Endothelial cell of umbilical vein (primary cell): ENCODE measurements at regions of chr5 and their contacts with region 1.

Region 1: GRCh38 chr5:147509710-147510651 is at the start of gene DPYSL3:
- DNase-seq: peak; percentile 90
- H3K4me3 ChIP-seq: peak within 1 kb of the TSS; percentile 46 to 85 (median 79)
- H3K27ac ChIP-seq: peak within 1 kb of the TSS; percentile 67
- H3K4me1 ChIP-seq: peaks cover 26% of the 10 kb centered on the region
- H3K27me3 ChIP-seq: no peaks in the 10 kb centered on the region
- CTCF ChIP-seq: peak; percentile 25 to 55
- POLR2A ChIP-seq: peak; percentile 60
- total RNA-seq, gene DPYSL3: 142 and 146 TPM in 2 replicates

Region 2: DNA sequence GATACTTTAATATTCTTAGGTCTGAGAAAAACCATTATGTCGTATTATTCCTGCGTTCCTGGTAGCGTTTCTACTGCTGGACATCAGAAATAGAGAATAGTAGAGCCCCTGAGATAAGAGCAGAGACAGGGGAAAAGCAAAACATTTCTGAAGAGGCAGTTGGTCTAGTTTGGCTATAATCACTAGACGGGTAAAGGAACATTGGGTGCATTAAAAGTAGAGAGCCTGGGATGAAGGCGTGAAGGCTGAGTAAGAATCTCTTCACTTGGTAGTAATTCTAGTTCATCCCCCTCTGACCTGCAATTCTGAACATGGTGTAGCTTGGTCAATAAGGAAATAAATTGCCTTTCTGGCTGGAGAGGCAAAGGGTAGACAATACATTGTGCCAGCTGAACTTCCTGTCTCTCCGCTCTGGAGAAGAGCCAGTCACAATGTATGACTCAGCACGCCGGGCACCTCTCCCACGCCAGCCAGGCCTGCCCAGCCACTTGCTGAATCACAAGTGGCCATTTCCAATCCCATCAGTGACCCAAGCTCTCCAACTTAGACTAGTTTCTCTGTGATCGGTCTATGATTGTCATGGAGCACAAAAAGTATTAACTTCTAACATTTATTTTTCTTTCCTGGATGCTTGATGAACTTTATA is 199.8 kb before region 1 on chr5:
- CTCF ChIA-PET with region 1: no interaction called
- POLR2A ChIA-PET with region 1: no interaction called
- dilution Hi-C with region 1: no loop called
- intact Hi-C with region 1: no loop called
- DNase-seq: peak; percentile 96
- H3K4me3 ChIP-seq: no peak overlapping the region
- H3K27ac ChIP-seq: peak overlapping the region; percentile 83
- H3K4me1 ChIP-seq: peaks cover 15% of the 10 kb centered on the region
- H3K27me3 ChIP-seq: no peaks in the 10 kb centered on the region
- CTCF ChIP-seq: no peak
- POLR2A ChIP-seq: no peak

Region 3: DNA sequence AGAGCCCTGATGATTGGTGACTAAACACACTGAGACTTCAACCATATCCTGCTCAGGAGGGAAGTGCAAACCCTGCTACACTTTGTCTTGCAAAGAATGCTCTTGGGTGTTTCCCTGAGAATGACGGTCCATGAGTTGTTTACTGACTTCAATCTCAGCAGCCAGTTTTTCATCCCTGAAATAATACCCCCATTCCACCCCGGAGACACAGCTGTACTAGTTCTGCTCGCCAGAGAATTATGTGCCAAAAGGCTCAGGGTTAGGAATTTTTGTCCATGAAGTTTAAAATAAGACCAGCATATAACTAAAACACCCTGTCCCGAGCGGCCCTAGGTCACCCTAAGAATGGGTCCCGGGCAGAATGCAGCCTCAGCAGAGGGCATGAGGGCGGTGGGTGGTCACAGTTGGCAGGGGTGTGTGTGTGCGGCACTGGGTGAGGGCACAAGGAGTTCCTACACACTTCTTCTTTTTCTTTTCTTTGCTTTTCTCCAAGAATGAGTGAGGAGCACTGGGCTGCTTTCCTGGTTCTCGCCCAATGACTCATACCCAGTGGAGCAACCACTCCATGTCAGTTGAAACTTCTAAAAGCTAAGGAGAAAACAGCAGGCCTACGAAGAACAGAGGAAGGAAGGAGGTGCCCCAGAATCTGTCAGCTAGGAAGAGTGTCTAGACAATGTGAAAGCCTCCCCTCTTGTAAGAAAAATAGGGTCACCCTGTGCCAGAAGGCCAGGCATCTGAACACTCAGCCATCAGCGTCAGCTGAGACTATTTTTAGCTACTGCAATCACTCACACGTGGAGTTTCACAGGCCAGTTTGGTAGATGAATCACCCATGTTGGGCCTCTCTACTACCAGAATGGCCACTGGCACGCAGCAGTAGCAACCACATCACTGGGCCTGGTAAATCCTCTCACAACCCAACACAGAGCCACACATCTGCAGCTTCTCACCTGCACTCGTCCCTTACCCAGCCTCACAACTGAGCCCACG is 106.0 kb before region 1 on chr5:
- CTCF ChIA-PET with region 1: no interaction called
- POLR2A ChIA-PET with region 1: no interaction called
- dilution Hi-C with region 1: no loop called
- intact Hi-C with region 1: loop called (anchors 1 kb)
- DNase-seq: peak; percentile 96
- H3K4me3 ChIP-seq: no peak overlapping the region
- H3K27ac ChIP-seq: peak overlapping the region; percentile 95
- H3K4me1 ChIP-seq: peaks cover 25% of the 10 kb centered on the region
- H3K27me3 ChIP-seq: no peaks in the 10 kb centered on the region
- CTCF ChIP-seq: no peak
- POLR2A ChIP-seq: no peak

Region 4: GRCh38 chr5:147464211-147464610 is 45.8 kb before region 1 on chr5:
- CTCF ChIA-PET with region 1: interaction called, 25 read pairs
- POLR2A ChIA-PET with region 1: interaction called, 4 read pairs
- dilution Hi-C with region 1: no loop called
- intact Hi-C with region 1: loop called (anchors 1 kb)
- DNase-seq: peak; percentile 81
- H3K4me3 ChIP-seq: no peak overlapping the region
- H3K27ac ChIP-seq: no peak overlapping the region
- H3K4me1 ChIP-seq: peaks cover 10% of the 10 kb centered on the region
- H3K27me3 ChIP-seq: no peaks in the 10 kb centered on the region
- CTCF ChIP-seq: peak; percentile 55 to 61
- POLR2A ChIP-seq: no peak

Region 5: DNA sequence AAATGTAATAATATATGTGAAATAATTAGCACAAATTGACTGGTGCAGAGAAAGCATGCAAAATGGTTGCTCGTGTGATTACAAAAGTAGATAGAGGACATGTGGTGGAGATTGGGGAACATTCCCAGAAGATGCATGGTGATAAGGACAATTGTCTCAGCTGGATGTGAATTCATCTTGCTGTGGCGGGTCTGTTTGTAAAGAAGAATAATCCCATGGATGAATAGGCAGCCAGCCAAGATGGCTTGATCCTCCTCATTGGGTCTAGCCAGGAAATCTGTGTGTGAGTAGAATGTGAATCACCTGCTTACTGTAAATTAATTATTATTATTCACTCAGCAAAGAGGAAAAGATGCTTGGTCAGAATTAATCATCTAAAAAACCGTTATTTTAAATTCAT is 12.5 kb after region 1 on chr5:
- CTCF ChIA-PET with region 1: interaction called, 5 read pairs
- POLR2A ChIA-PET with region 1: no interaction called
- dilution Hi-C with region 1: no loop called
- intact Hi-C with region 1: loop called (anchors 1 kb)
- DNase-seq: peak; percentile 87
- H3K4me3 ChIP-seq: no peak overlapping the region
- H3K27ac ChIP-seq: peak overlapping the region; percentile 11
- H3K4me1 ChIP-seq: peaks cover 19% of the 10 kb centered on the region
- H3K27me3 ChIP-seq: no peaks in the 10 kb centered on the region
- CTCF ChIP-seq: no peak
- POLR2A ChIP-seq: no peak

Region 6: GRCh38 chr5:147530530-147531389 is 20.8 kb after region 1 on chr5:
- CTCF ChIA-PET with region 1: interaction called, 4 read pairs
- POLR2A ChIA-PET with region 1: no interaction called
- dilution Hi-C with region 1: no loop called
- intact Hi-C with region 1: loop called (anchors 1 kb)
- DNase-seq: peak; percentile 85
- H3K4me3 ChIP-seq: peak overlapping the region in 1 of 3 experiments; percentile 22
- H3K27ac ChIP-seq: peak overlapping the region; percentile 69
- H3K4me1 ChIP-seq: peaks cover 33% of the 10 kb centered on the region
- H3K27me3 ChIP-seq: no peaks in the 10 kb centered on the region
- CTCF ChIP-seq: no peak
- POLR2A ChIP-seq: no peak

Region 7: DNA sequence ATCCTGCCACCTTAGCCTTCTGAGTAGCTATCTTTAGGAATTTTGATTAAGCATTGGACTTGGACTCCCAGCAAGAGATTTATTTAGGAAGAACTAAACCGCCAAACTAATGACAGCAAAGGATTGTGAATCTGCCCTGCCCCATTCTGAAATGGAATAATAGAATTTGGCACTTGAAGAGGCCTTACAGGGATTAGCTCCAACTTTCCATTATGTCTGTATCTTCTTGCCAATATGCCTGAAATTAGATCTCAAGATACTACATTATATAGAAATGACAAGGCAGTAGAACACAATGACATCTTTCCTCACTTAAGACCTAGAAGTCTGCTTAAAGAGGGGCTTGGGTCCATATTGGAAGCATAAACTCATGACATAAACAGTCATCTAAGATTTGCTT is 76.9 kb after region 1 on chr5:
- CTCF ChIA-PET with region 1: no interaction called
- POLR2A ChIA-PET with region 1: no interaction called
- dilution Hi-C with region 1: no loop called
- intact Hi-C with region 1: no loop called
- DNase-seq: no peak
- H3K4me3 ChIP-seq: no peak overlapping the region
- H3K27ac ChIP-seq: no peak overlapping the region
- H3K4me1 ChIP-seq: no peaks in the 10 kb centered on the region
- H3K27me3 ChIP-seq: peaks cover 0 to 12% of the 10 kb centered on the region in 2 experiments
- CTCF ChIP-seq: no peak
- POLR2A ChIP-seq: no peak